ENCODE measurements at regions of chr18 and their contacts with region 1.

Region 1: GRCh38 chr18:39414009-39414700 is 1848.6 kb upstream of the CELF4 start:
- DNase-seq: no peak
- ATAC-seq: no peak
- H3K4me3 ChIP-seq: no peak overlapping the region
- H3K27ac ChIP-seq: no peak overlapping the region
- H3K4me1 ChIP-seq: no peaks in the 10 kb centered on the region
- H3K27me3 ChIP-seq: no peaks in the 10 kb centered on the region
- CTCF ChIP-seq: no peak
- POLR2A ChIP-seq: no peak

Region 2: DNA sequence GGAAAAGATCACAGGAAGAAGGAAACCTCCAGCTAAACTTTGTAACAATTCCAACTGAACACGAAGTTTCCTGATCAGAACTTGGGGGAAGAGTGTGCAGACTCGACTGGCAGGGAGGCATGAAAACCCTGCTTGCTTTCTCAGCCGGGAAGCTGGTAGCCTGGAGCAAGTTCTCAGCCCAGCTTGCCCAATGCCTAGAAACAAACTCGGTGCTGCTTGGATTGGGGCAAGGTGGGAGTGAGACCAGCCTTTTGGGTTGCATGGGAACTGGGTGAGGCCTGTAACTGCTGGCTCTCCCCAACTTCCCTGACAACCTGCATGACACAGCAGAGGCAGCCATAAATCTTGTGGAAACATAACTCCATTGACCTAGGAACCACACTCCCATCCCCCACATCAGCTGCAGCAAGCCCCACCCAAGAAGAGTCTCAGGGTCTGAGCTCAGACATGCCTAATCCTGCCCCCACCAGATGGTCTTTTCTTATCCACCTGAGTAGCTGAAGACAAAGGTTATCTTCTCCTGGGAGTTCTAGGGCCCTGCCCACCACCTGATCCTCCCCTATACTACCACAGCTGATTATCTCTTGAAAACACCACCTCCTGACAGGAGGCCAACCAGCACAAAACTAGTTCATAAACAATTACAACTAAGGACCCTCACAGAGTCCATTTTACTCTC is 11.2 kb after region 1 on chr18:
- intact Hi-C with region 1: loop called in 1 of 10 experiments (anchors 1 kb)
- DNase-seq: no peak
- ATAC-seq: no peak
- H3K4me3 ChIP-seq: no peak overlapping the region
- H3K27ac ChIP-seq: no peak overlapping the region
- H3K4me1 ChIP-seq: no peaks in the 10 kb centered on the region
- H3K27me3 ChIP-seq: no peaks in the 10 kb centered on the region
- CTCF ChIP-seq: no peak
- POLR2A ChIP-seq: no peak